ENCODE measurements at regions of chr1 and their contacts with region 1.

Region 1: GRCh38 chr1:110460253-110461220 is 9.6 kb downstream of the PROK1 start:
- DNase-seq: peak; percentile 86
- H3K4me3 Mint-ChIP-seq: no peak overlapping the region
- H3K27ac Mint-ChIP-seq: no peak overlapping the region
- H3K4me1 Mint-ChIP-seq: peaks cover 11% of the 10 kb centered on the region
- H3K27me3 Mint-ChIP-seq: no peaks in the 10 kb centered on the region
- CTCF ChIP-seq: peak; percentile 97

Region 2: GRCh38 chr1:110203021-110203661 is 257.4 kb before region 1 on chr1:
- CTCF ChIA-PET with region 1: interaction called, 304 read pairs
- POLR2A ChIA-PET with region 1: no interaction called
- intact Hi-C with region 1: loop called (anchors 1 kb)
- DNase-seq: peak; percentile 71
- H3K4me3 Mint-ChIP-seq: no peak overlapping the region
- H3K27ac Mint-ChIP-seq: no peak overlapping the region
- H3K4me1 Mint-ChIP-seq: no peaks in the 10 kb centered on the region
- H3K27me3 Mint-ChIP-seq: no peaks in the 10 kb centered on the region
- CTCF ChIP-seq: peak; percentile 67

Region 3: DNA sequence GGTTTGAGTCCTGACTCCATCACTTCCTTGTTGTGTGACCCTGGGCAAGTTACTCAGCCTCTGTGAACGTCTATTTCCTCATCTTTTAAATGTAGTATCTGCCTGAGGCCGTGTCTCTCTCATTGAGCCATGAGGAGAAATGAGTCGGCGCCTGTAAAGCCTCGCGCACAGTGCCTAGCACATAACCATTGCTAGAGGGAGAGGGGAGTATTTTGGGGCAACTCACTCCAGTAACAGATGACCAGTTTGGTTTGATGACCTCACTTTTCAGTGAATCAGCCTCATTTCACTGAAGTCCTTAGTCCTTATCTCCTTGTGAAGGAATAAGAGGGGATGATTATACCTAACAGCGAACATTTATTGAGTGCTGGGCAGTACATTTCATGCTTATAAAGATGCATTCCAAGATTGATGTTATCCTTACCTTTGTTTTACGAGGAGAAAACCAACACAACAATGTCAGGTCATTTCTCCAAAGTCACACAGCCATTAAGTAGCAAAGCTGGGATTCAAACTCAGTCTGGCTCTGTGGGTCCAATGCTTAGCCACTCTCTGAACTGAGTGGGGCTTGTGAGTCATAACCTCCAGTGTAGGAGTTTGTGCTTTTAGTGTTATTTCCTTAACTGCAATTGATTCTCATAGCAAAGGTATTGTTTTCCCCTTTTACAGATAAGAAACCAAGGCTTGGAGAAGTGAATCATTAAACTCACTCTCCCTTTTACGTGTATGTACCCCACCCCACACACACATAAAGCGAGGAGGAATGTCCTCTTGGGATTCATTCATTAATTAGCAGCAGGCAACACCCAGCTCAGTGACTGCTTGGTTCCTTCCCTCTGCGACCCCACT is 224.5 kb before region 1 on chr1:
- CTCF ChIA-PET with region 1: no interaction called
- POLR2A ChIA-PET with region 1: no interaction called
- intact Hi-C with region 1: no loop called
- DNase-seq: peak; percentile 70
- H3K4me3 Mint-ChIP-seq: no peak overlapping the region
- H3K27ac Mint-ChIP-seq: no peak overlapping the region
- H3K4me1 Mint-ChIP-seq: no peaks in the 10 kb centered on the region
- H3K27me3 Mint-ChIP-seq: no peaks in the 10 kb centered on the region
- CTCF ChIP-seq: no peak

Region 4: DNA sequence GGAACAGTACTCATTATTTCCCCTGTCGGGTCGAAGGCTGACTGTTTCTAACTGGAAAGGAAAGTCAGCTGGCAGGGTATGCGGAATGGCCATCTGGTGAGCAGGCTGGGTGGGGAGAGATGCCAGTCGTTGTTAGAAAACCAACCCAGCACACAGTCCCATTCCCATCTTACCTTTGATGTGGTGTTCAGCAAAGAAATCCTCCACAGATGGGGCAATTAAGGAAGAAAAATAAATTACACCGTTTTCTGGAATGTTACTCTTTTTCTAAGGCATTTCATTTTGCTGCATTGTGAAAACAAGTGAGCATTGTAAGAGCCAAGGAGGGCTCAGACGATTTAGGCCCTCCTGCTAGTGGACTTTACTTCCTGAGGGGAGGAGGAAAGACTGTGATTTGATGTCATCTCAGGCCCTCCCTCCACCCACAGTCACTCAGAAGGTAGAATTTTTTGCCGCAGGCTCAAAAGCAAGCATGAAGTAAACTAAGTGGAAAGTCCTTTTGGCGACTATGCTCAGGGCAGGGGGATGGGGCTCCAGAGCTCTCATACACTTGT is 69.8 kb before region 1 on chr1 and contains the start of gene SLC16A4:
- CTCF ChIA-PET with region 1: interaction called, 12 read pairs
- POLR2A ChIA-PET with region 1: no interaction called
- intact Hi-C with region 1: no loop called
- DNase-seq: peak; percentile 55
- H3K4me3 Mint-ChIP-seq: peak within 1 kb of the TSS; percentile 66
- H3K27ac Mint-ChIP-seq: peak within 1 kb of the TSS; percentile 57
- H3K4me1 Mint-ChIP-seq: peaks cover 35% of the 10 kb centered on the region
- H3K27me3 Mint-ChIP-seq: no peaks in the 10 kb centered on the region
- CTCF ChIP-seq: no peak
- total RNA-seq, gene SLC16A4: 9.8 and 11.0 TPM in 2 replicates

Region 5: DNA sequence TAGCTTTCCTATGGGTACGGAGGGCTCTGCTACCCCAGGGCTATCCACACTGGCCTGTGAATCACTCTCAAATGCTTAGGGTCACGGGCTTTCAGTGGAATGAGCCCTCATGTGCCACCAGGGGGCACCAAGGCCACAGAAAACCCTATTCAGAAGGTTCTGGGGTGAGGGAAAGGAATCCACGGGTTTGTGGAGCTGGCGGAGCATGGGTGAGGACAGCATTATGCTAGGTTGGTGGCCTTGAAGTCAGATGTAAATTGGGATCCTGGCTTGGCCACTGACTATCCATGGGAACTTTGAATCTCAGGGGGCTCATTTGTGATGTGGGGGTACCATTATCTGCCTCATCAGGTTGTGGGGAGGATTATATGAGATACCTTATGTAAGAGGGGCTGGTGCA is 48.0 kb before region 1 on chr1:
- CTCF ChIA-PET with region 1: interaction called, 808 read pairs
- POLR2A ChIA-PET with region 1: interaction called, 40 read pairs
- intact Hi-C with region 1: loop called (anchors 1 kb)
- DNase-seq: peak; percentile 84
- H3K4me3 Mint-ChIP-seq: no peak overlapping the region
- H3K27ac Mint-ChIP-seq: peak overlapping the region; percentile 17
- H3K4me1 Mint-ChIP-seq: peaks cover 12% of the 10 kb centered on the region
- H3K27me3 Mint-ChIP-seq: no peaks in the 10 kb centered on the region
- CTCF ChIP-seq: peak; percentile 87

Region 6: GRCh38 chr1:110440877-110441276 is 19.7 kb before region 1 on chr1:
- CTCF ChIA-PET with region 1: interaction called, 77 read pairs
- POLR2A ChIA-PET with region 1: no interaction called
- intact Hi-C with region 1: no loop called
- DNase-seq: peak; percentile 32
- H3K4me3 Mint-ChIP-seq: no peak overlapping the region
- H3K27ac Mint-ChIP-seq: peak overlapping the region; percentile 65
- H3K4me1 Mint-ChIP-seq: peaks cover 21% of the 10 kb centered on the region
- H3K27me3 Mint-ChIP-seq: peaks cover 11% of the 10 kb centered on the region
- CTCF ChIP-seq: no peak

Region 7: GRCh38 chr1:110471163-110471562 is 10.6 kb after region 1 on chr1:
- CTCF ChIA-PET with region 1: interaction called, 20 read pairs
- POLR2A ChIA-PET with region 1: no interaction called
- intact Hi-C with region 1: no loop called
- DNase-seq: no peak
- H3K4me3 Mint-ChIP-seq: no peak overlapping the region
- H3K27ac Mint-ChIP-seq: no peak overlapping the region
- H3K4me1 Mint-ChIP-seq: peaks cover 2% of the 10 kb centered on the region
- H3K27me3 Mint-ChIP-seq: peaks cover 10% of the 10 kb centered on the region
- CTCF ChIP-seq: no peak

Region 8: DNA sequence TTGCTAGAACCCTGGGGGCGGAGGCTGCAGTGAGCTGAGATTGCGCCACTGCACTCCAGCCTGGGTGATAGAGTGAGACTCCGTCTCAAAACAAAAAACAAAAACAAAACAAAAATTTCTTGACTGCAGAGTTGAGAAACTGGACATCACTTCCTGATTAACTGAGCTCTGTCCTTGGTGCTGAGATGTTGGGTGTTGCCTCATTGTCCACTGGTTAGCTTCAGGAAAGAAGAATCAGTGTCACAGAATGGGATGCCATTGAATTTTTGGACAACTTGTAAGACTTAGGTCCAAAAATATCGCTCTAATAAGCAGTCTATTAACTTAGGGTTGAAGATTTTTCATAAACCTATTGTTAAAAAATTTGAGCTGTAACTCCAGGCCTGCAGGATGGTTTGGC is 82.2 kb after region 1 on chr1:
- CTCF ChIA-PET with region 1: no interaction called
- POLR2A ChIA-PET with region 1: no interaction called
- intact Hi-C with region 1: no loop called
- DNase-seq: peak; percentile 72
- H3K4me3 Mint-ChIP-seq: no peak overlapping the region
- H3K27ac Mint-ChIP-seq: no peak overlapping the region
- H3K4me1 Mint-ChIP-seq: no peaks in the 10 kb centered on the region
- H3K27me3 Mint-ChIP-seq: peaks cover 42% of the 10 kb centered on the region
- CTCF ChIP-seq: no peak